Activated CD4-positive, alpha-beta T cell treated with anti-CD3 and anti-CD28 coated beads for 36 hours (primary cell): ENCODE measurements at regions of chr6 and their contacts with region 1.

Region 1: GRCh38 chr6:116662202-116662601 is 6.4 kb downstream of the ZUP1 start:
- DNase-seq: no peak
- ATAC-seq: peak; percentile 86
- H3K4me3 Mint-ChIP-seq: no peak overlapping the region
- H3K27ac Mint-ChIP-seq: peak overlapping the region; percentile 14
- H3K4me1 Mint-ChIP-seq: peaks cover 46% of the 10 kb centered on the region
- H3K27me3 Mint-ChIP-seq: no peaks in the 10 kb centered on the region

Region 2: DNA sequence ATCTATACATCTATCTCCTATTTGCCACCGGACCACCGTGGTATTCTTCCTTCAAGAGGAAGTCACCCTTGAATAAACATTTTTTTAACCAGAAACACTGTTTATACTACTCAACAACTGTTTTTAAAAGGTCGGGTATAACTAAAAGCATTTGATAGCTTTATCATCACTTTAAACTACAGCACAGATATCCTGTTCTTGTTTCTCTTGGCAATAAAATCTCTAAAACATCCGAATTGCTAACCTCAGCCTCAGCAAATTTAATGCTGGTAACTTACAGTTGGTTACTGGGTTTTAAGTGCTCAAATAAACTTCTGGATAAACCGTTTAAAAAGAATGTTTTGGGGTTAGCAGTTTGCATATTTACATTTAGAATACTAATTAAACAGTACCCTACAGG is 14.0 kb before region 1 on chr6:
- CTCF ChIA-PET with region 1: interaction called, 16 read pairs
- POLR2A ChIA-PET with region 1: no interaction called
- intact Hi-C with region 1: no loop called
- DNase-seq: no peak
- ATAC-seq: no peak
- H3K4me3 Mint-ChIP-seq: no peak overlapping the region
- H3K27ac Mint-ChIP-seq: no peak overlapping the region
- H3K4me1 Mint-ChIP-seq: peaks cover 6% of the 10 kb centered on the region
- H3K27me3 Mint-ChIP-seq: no peaks in the 10 kb centered on the region

Region 3: DNA sequence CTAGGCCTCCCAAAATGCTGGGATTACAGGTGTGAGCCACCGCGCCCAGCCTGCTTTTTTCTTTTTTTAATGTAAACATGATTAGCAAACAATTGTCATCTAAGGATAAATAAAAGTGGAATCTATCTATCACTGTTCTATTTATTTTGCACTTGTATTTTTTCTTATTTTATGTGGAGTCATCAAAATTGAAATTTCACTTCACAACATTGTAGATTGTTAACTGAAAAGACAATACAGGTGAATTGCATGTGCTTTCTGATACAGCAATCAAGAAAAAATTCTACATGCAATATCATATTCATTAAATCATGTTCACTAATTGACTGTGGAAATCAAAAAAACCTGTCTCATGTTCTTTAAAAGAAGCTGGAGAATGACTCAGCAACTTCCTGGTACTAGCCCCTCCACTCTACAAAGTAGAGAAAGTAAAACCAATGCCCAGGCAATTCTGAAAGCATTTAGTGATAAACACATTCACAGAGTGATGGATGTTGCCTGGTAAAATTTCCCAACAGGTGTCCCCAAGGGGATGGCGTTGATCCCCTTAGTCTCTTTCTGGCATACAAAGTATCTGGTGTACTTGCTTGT is 204.2 kb after region 1 on chr6:
- CTCF ChIA-PET with region 1: no interaction called
- POLR2A ChIA-PET with region 1: no interaction called
- intact Hi-C with region 1: no loop called
- DNase-seq: no peak
- ATAC-seq: no peak
- H3K4me3 Mint-ChIP-seq: no peak overlapping the region
- H3K27ac Mint-ChIP-seq: no peak overlapping the region
- H3K4me1 Mint-ChIP-seq: no peaks in the 10 kb centered on the region
- H3K27me3 Mint-ChIP-seq: peaks cover 3% of the 10 kb centered on the region